PC-3 (cell line): ENCODE measurements at regions of chr1 and their contacts with region 1.

Region 1: GRCh38 chr1:224434691-224435317 is at the start of gene WDR26:
- DNase-seq: peak; percentile 81
- ATAC-seq: peak; percentile 76
- H3K4me3 ChIP-seq: peak within 1 kb of the TSS; percentile 83
- H3K27ac ChIP-seq: peak within 1 kb of the TSS; percentile 67
- H3K4me1 ChIP-seq: peaks cover 46% of the 10 kb centered on the region
- H3K27me3 ChIP-seq: no peaks in the 10 kb centered on the region
- CTCF ChIP-seq: 0 out of 2 replicates have a peak, but pooled peaks have one; percentile 24
- total RNA-seq, gene WDR26: 40.7 and 45.2 TPM in 2 replicates

Region 2: GRCh38 chr1:224356685-224357625 is 77.8 kb before region 1 on chr1 and contains the start of gene CNIH4:
- CTCF ChIA-PET with region 1: no interaction called
- POLR2A ChIA-PET with region 1: interaction called, 4 read pairs
- intact Hi-C with region 1: loop called (anchors 2 kb)
- DNase-seq: peak; percentile 98
- ATAC-seq: peak; percentile 95
- H3K4me3 ChIP-seq: peak within 1 kb of the TSS; percentile 68
- H3K27ac ChIP-seq: peak within 1 kb of the TSS; percentile 1
- H3K4me1 ChIP-seq: peaks cover 14% of the 10 kb centered on the region
- H3K27me3 ChIP-seq: no peaks in the 10 kb centered on the region
- CTCF ChIP-seq: no peak
- total RNA-seq, gene CNIH4: 49.2 and 89.9 TPM in 2 replicates

Region 3: DNA sequence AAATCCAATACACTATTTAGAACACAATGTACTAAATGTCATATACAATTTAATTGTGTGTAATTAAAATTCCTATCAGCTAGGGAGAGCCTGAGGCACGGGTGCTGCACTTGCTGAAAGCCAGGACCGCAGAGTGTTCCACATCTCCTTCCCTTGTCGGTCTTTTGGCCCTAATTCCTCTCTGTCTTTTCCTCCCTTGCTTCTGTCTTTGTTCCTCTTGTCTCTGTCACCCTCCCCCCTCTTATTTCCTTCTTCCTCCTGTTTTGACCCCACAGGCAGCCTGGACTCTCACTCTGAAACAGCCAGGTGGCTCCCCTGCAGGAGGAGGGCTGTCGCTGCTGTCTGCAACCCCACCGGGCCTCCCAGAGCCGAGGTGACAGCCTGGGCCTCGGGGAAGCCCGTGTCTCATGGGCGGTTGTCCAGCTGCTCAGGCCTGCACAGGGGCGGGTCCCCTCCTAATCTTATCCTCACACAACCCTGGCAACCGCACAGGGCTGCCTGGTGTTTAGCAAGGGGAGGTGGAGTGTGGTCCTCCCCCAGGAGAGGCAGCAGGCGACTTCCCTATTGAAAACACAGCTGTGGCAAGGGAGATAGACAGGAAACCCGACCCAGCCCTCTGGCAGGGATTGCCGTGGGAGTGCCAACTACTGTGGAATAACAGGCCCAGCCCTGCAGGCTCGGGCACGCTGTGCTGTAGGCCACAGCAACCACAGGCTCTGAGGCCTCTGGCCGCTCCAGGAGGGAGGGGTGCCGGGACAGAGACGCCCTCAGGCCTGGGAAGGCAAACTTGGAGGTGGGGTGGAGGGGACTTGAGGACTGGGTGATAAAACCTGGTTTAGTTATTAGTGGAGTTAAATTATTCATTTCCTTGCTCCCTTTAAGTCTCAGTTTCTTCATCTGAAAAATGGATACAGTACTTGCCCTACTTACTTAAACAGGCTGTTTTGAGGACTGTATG is 68.6 kb after region 1 on chr1:
- CTCF ChIA-PET with region 1: no interaction called
- POLR2A ChIA-PET with region 1: interaction called, 4 read pairs
- intact Hi-C with region 1: loop called (anchors 2 kb)
- DNase-seq: peak; percentile 95
- ATAC-seq: peak; percentile 91
- H3K4me3 ChIP-seq: peak overlapping the region; percentile 36; the same call in 1 of the 2 replicates
- H3K27ac ChIP-seq: peak overlapping the region; percentile 76
- H3K4me1 ChIP-seq: peaks cover 40% of the 10 kb centered on the region
- H3K27me3 ChIP-seq: no peaks in the 10 kb centered on the region
- CTCF ChIP-seq: peak; percentile 42; the same call in 1 of the 2 replicates

Region 4: GRCh38 chr1:224637515-224637914 is 202.7 kb after region 1 on chr1:
- CTCF ChIA-PET with region 1: no interaction called
- POLR2A ChIA-PET with region 1: no interaction called
- intact Hi-C with region 1: loop called (anchors 5 kb)
- DNase-seq: peak; percentile 99
- ATAC-seq: peak; percentile 83
- H3K4me3 ChIP-seq: peak overlapping the region; percentile 7; the same call in 1 of the 2 replicates
- H3K27ac ChIP-seq: peak overlapping the region; percentile 66
- H3K4me1 ChIP-seq: peaks cover 66% of the 10 kb centered on the region
- H3K27me3 ChIP-seq: no peaks in the 10 kb centered on the region
- CTCF ChIP-seq: no peak